GM18951 (cell line): ENCODE measurements at regions of chr13 and their contacts with region 1.

Region 1: GRCh38 chr13:26985285-26985878 is 186.2 kb downstream of the USP12 start:
- POLR2A ChIP-seq: no peak

Region 2: GRCh38 chr13:27270594-27271520 is 285.5 kb after region 1 on chr13 and contains the start of gene RASL11A:
- in situ Hi-C with region 1: loop called (anchors 10 kb)
- POLR2A ChIP-seq: peak; percentile 45

Region 3: DNA sequence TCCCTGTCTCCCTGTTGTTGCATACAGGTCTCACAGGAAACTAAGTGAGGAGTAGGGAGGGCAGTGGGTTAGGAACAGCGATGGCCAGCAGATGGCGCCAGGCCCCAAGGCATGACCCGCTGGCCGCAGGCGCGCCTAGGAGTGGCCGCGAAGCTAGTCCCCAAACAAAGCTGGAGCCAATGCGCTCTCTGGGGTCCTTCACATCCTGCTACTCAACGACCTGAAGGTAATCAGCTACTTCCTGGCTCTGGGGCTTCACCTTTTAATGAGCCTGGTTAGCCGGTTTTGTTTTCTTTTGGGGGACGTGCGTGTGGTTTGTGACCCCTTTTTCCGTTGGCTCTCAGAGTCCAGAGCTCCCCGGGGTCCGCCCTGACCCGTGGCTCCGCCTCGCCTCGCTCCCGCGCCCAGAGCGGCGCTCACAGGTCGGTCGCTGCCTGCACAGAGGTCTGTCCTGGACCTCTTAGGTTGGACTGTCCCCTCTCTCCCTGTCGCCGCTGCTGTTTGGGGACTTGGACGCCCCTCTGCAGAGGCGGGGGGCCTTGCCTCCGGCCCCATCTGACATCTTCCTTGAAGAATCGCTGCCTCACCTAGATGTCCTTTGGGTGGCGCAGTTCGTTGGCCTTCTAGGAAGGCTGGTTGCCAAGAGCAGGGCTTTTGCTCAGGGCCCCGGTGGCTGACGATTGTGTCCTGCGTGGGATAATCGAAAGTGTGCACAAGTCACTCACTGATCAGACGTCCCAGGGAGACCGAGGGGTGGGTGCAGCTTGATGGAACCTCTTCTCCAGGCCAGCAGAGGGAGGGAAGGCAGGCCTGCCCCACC is 376.9 kb after region 1 on chr13:
- in situ Hi-C with region 1: loop called (anchors 5 kb)
- POLR2A ChIP-seq: no peak